Activated CD4-positive, alpha-beta T cell treated with anti-CD3 and anti-CD28 coated beads, Interleukin-2, amount 10 ng/mL, durations not matched to agents 7 days and 5 days (primary cell): ENCODE measurements at regions of chr1 and their contacts with region 1.

Region 1: GRCh38 chr1:175188936-175189335 is 3.6 kb downstream of the KIAA0040 start:
- DNase-seq: peak; percentile 68
- H3K4me3 Mint-ChIP-seq: peak overlapping the region; percentile 92
- H3K27ac Mint-ChIP-seq: peak overlapping the region; percentile 91
- H3K4me1 Mint-ChIP-seq: peaks cover 79% of the 10 kb centered on the region
- H3K27me3 Mint-ChIP-seq: no peaks in the 10 kb centered on the region

Region 2: GRCh38 chr1:175208773-175209492 is 20.0 kb after region 1 on chr1:
- CTCF ChIA-PET with region 1: interaction called, 12 read pairs
- POLR2A ChIA-PET with region 1: interaction called, 3 read pairs
- DNase-seq: peak; percentile 82
- H3K4me3 Mint-ChIP-seq: peak overlapping the region; percentile 72
- H3K27ac Mint-ChIP-seq: peak overlapping the region; percentile 97
- H3K4me1 Mint-ChIP-seq: peaks cover 66% of the 10 kb centered on the region
- H3K27me3 Mint-ChIP-seq: no peaks in the 10 kb centered on the region